Naive thymus-derived CD4-positive, alpha-beta T cell (primary cell): ENCODE measurements at regions of chr22 and their contacts with region 1.

Region 1: GRCh38 chr22:38230108-38230825 is 28.5 kb downstream of the MAFF start:
- DNase-seq: peak in 7 of 9 donors; percentile 14 to 48 (median 38)
- ATAC-seq: peak; percentile 78
- H3K4me3 ChIP-seq: no peak overlapping the region
- H3K4me3 Mint-ChIP-seq: no peak overlapping the region
- H3K27ac ChIP-seq: no peak overlapping the region
- H3K27ac Mint-ChIP-seq: peak overlapping the region in 1 of 9 donors; percentile 9
- H3K4me1 ChIP-seq: no peaks in the 10 kb centered on the region
- H3K4me1 Mint-ChIP-seq: peaks cover 0 to 11% (median 0%) of the 10 kb centered on the region in 7 donors
- H3K27me3 ChIP-seq: no peaks in the 10 kb centered on the region
- H3K27me3 Mint-ChIP-seq: no peaks in the 10 kb centered on the region

Region 2: DNA sequence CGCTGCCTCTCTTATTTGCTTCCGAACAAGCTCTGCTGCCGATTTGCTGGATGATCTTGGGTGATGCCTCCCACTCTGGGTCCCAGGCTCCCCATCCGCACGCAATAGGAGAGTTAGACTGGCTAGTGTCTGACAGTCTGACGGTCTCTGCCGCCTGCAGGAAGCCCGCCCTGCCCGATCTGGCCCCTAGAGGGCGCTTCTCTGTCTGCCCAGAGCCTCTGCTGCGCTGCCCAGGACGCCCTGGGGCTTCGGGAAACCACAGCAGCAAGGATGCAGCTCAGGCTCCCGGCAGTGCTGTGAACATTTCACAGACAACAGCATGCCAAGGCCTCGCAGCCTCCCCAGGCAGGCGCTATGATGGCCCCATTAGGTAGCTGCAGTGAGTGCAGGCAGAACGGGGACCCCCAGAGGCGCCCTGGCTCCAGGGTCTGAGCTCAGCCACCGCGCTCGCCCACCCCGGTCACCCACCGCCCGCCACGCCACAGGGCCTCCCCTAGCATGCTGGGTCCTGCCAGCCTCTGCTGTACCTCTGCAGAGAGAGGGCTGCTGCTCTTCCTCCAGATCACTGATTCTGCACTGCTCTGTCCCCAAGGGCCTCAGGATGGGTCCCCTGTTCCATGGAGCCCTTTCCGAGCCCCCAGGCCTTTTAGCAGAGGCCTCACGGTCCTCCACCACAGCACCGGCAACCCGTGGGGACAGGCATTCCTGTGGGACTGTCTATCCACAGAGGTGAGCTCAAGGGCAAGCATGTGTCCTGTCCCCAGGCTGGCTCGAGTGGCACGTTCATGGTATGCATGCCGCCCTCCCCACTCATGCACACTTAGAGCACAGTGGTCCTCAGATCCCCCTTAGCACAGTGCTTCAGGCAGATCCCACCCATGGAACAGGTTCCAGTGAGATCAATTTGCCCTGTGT is 115.5 kb before region 1 on chr22:
- CTCF ChIA-PET with region 1: interaction called, 6 read pairs
- POLR2A ChIA-PET with region 1: no interaction called
- intact Hi-C with region 1: loop called in 1 of 2 experiments (anchors 1 kb)
- DNase-seq: peak; percentile 42 to 83 (median 67)
- ATAC-seq: peak; percentile 92
- H3K4me3 ChIP-seq: no peak overlapping the region
- H3K4me3 Mint-ChIP-seq: peak overlapping the region in 1 of 10 donors; percentile 41
- H3K27ac ChIP-seq: no peak overlapping the region
- H3K27ac Mint-ChIP-seq: peak overlapping the region in 2 of 9 donors; percentile 57 to 81
- H3K4me1 ChIP-seq: no peaks in the 10 kb centered on the region
- H3K4me1 Mint-ChIP-seq: peaks cover 0 to 6% (median 4%) of the 10 kb centered on the region in 7 donors
- H3K27me3 ChIP-seq: no peaks in the 10 kb centered on the region
- H3K27me3 Mint-ChIP-seq: no peaks in the 10 kb centered on the region